ENCODE measurements at regions of chr5 and their contacts with region 1.

Region 1: DNA sequence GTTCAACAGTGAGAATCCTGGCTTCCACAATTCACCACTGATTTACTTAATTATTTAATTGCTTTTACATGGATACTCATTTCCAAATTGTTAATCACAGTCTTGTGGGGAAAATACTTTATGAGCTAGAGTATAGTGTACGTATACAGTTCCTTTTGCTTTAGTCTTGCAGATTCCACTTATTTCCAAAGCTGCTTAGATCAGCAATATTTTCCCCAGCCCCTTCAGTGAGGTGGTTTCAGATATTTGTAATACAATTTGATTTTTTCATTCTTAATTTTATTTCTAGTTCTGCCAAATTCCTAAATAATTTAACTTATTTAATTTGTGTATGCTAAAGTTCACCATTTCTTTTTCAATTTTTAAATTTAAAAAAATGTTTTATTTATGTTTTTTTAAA is 40.3 kb upstream of the GABRA6 start:
- DNase-seq: no peak
- H3K4me3 Mint-ChIP-seq: no peak overlapping the region
- H3K27ac Mint-ChIP-seq: no peak overlapping the region
- H3K4me1 Mint-ChIP-seq: no peaks in the 10 kb centered on the region
- H3K27me3 Mint-ChIP-seq: no peaks in the 10 kb centered on the region

Region 2: GRCh38 chr5:160439205-160439600 is 1206.1 kb before region 1 on chr5:
- intact Hi-C with region 1: no loop called
- DNase-seq: peak; percentile 97
- H3K4me3 Mint-ChIP-seq: peak overlapping the region; percentile 92
- H3K27ac Mint-ChIP-seq: peak overlapping the region; percentile 99
- H3K4me1 Mint-ChIP-seq: peaks cover 61% of the 10 kb centered on the region
- H3K27me3 Mint-ChIP-seq: no peaks in the 10 kb centered on the region

Region 3: DNA sequence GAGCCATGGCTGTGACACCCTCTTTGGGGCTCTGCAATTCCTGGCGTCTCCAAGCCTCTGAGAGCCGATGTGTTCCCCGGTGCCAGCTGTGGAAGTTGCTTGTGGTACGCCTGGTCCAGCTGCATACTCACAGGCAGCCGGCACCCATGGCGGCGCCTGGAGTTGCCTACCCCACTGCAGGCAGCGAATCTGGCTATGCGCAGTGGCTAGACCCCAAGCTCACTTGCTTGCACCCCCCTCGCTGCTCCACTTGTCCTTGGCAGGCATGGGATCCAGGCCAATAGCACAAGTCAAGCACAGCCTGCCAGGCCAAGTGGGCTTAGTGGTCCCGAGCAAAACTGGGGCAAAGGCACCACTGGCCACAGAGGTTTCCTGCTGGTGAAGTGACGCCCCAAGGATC is 15.5 kb after region 1 on chr5:
- intact Hi-C with region 1: loop called (anchors 1 kb)
- DNase-seq: no peak
- H3K4me3 Mint-ChIP-seq: no peak overlapping the region
- H3K27ac Mint-ChIP-seq: no peak overlapping the region
- H3K4me1 Mint-ChIP-seq: no peaks in the 10 kb centered on the region
- H3K27me3 Mint-ChIP-seq: no peaks in the 10 kb centered on the region

Region 4: DNA sequence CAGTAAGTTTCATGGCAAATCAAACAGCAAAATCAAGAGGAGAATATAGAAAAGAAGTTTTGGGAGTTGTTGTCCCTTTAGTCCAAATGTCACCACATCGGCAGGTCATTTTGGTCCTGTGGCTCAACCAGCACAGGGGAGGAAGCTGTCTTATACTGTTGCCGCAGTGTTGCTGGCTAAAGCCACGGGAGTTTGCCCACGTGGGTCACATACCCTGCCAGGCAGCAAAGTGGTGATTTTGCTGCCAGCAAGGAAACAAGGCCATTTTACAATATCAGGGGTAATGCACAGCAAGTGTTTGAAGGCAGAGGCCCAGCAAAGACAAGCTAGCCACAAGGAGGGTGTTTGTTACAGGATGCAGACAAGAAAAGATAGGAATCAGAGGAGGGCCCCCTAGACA is 54.8 kb after region 1 on chr5:
- intact Hi-C with region 1: no loop called
- DNase-seq: no peak
- H3K4me3 Mint-ChIP-seq: no peak overlapping the region
- H3K27ac Mint-ChIP-seq: no peak overlapping the region
- H3K4me1 Mint-ChIP-seq: no peaks in the 10 kb centered on the region
- H3K27me3 Mint-ChIP-seq: no peaks in the 10 kb centered on the region